Ascending aorta (tissue), 2 donors: ENCODE measurements at regions of chr11 and their contacts with region 1.

Region 1: DNA sequence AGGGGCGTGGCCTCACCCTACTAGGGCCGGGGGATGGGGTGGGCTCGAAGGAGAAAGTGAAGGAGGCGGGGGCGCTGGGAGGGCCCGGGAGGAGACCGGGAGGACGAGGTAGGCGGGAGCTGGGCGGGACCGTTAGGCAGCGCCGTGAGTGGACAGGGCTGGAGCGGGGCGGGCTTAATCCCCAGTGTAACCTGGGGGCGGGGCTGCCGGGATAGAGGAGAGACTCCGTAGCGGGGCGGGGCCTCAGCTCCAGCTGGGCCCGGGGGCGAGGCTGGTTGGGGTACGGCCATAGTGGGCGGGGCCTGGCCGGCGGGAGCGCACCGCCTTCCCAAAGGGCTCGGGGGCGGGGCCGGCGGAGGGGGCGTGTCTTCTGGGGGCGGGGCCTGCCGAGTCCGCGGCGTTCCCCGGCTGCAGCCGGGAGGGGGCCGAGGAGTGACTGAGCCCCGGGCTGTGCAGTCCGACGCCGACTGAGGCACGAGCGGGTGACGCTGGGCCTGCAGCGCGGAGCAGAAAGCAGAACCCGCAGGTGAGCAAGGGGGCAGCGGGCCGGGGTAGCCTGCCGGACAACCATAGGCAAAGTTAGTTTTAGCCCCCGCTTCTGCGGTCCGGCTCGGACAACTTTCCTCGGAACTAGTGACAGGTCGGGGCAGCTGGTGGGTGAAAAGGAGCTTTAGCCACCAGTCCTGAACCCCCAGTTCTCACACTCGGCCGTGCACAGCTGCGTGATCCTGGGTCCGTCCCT is at the start of gene CD82:
- DNase-seq: peak; percentile 99 to 100
- H3K4me3 ChIP-seq: peak within 1 kb of the TSS; percentile 61 to 65
- H3K27ac ChIP-seq: peak within 1 kb of the TSS; percentile 98 to 99
- H3K4me1 ChIP-seq: peaks cover 14 to 43% of the 10 kb centered on the region in 2 donors
- H3K27me3 ChIP-seq: no peaks in the 10 kb centered on the region
- CTCF ChIP-seq: peak; percentile 34 to 44 (median 41)
- total RNA-seq, gene CD82: 28.3 TPM

Region 2: GRCh38 chr11:44555031-44555800 is 10.2 kb before region 1 on chr11:
- intact Hi-C with region 1: no loop called
- DNase-seq: no peak
- H3K4me3 ChIP-seq: no peak overlapping the region
- H3K27ac ChIP-seq: no peak overlapping the region
- H3K4me1 ChIP-seq: peaks cover 0 to 2% of the 10 kb centered on the region in 2 donors
- H3K27me3 ChIP-seq: no peaks in the 10 kb centered on the region
- CTCF ChIP-seq: no peak

Region 3: GRCh38 chr11:44600839-44601383 is 35.5 kb after region 1 on chr11:
- intact Hi-C with region 1: loop called (anchors 1 kb)
- DNase-seq: no peak
- H3K4me3 ChIP-seq: no peak overlapping the region
- H3K27ac ChIP-seq: peak overlapping the region; percentile 85 to 91
- H3K4me1 ChIP-seq: peaks cover 26 to 67% of the 10 kb centered on the region in 2 donors
- H3K27me3 ChIP-seq: no peaks in the 10 kb centered on the region
- CTCF ChIP-seq: no peak

Region 4: GRCh38 chr11:44651535-44652155 is 86.3 kb after region 1 on chr11:
- intact Hi-C with region 1: no loop called
- DNase-seq: no peak
- H3K4me3 ChIP-seq: no peak overlapping the region
- H3K27ac ChIP-seq: no peak overlapping the region
- H3K4me1 ChIP-seq: no peaks in the 10 kb centered on the region
- H3K27me3 ChIP-seq: no peaks in the 10 kb centered on the region
- CTCF ChIP-seq: no peak

Region 5: GRCh38 chr11:44760917-44761550 is 195.7 kb after region 1 on chr11:
- intact Hi-C with region 1: loop called (anchors 5 kb)
- DNase-seq: peak in 1 of 2 donors; percentile 81
- H3K4me3 ChIP-seq: no peak overlapping the region
- H3K27ac ChIP-seq: no peak overlapping the region
- H3K4me1 ChIP-seq: peaks cover 4 to 25% of the 10 kb centered on the region in 2 donors
- H3K27me3 ChIP-seq: no peaks in the 10 kb centered on the region
- CTCF ChIP-seq: no peak

Region 6: GRCh38 chr11:45339729-45340519 is 774.5 kb after region 1 on chr11:
- intact Hi-C with region 1: loop called (anchors 10 kb)
- DNase-seq: peak; percentile 80 to 98
- H3K4me3 ChIP-seq: peak overlapping the region; percentile 27 to 39
- H3K27ac ChIP-seq: peak overlapping the region in 1 of 2 donors; percentile 36
- H3K4me1 ChIP-seq: no peaks in the 10 kb centered on the region
- H3K27me3 ChIP-seq: no peaks in the 10 kb centered on the region
- CTCF ChIP-seq: peak; percentile 87 to 92 (median 87)

Region 7: DNA sequence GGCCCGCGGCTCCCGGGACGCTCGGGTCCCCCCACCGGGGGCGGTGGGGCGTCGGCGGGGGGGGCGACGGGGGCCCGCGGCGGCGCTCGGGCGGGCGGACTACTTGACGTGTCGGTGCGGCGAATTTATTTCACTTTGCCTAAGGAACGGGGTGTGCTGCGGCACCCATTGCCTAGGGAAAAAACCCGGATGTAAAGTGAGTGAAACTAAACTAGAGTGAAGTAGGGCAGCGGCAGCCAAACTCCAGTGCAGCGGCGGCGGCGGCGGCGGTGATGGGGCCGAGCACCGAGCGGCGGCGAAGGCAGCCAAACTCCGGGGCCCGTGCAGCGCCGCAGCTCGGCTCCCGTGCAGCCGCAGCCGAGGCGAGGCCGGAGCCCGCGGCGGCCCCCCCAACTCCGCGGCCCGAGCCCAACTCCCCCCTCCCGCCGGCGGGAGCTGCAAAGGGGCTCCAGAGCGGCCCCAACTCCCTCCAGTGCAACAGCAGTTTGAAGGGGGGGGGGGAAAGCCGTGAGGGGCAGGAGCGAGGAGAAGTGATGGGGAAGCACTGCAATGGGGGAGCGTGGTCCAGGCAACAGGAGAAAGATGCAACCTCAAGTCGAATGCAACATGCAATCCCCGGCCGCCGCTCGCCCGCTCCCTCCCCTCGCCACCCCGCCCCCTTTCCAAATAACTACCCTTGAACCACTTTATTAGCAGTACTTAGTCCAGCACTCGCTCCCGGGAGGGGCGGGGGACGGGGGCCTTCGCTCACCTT is 1556.5 kb after region 1 on chr11:
- intact Hi-C with region 1: loop called (anchors 5 kb)
- DNase-seq: peak; percentile 30 to 87
- H3K4me3 ChIP-seq: peak overlapping the region; percentile 69 to 95
- H3K27ac ChIP-seq: peak overlapping the region; percentile 58 to 95
- H3K4me1 ChIP-seq: peaks cover 0 to 15% of the 10 kb centered on the region in 2 donors
- H3K27me3 ChIP-seq: no peaks in the 10 kb centered on the region
- CTCF ChIP-seq: no peak